Heart left ventricle (tissue), 16 donors: ENCODE measurements at regions of chr6 and their contacts with region 1.

Region 1: DNA sequence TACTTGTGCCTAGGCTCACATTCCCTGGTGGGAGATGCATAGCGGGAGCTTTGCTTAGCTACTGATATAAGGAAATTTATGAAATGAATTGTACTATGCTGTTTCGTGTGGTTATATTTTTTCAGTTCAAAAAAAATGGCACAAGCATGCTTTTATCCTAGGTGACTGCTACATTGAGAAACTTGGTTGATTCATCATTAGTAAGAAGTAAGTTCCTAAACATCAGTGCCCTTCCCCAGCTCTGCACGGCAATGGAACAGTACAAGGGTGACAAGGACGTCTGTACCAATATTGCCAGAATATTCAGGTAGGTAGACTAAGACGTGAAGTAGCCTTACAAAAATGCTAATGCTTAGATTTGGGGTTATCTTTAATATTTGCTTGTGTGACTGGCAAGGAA is 79.7 kb downstream of the ARMC2 start:
- DNase-seq: no peak
- ATAC-seq: no peak
- H3K4me3 ChIP-seq: no peak overlapping the region
- H3K27ac ChIP-seq: no peak overlapping the region
- H3K4me1 ChIP-seq: peaks cover 0 to 8% (median 0%) of the 10 kb centered on the region in 12 donors
- H3K27me3 ChIP-seq: no peaks in the 10 kb centered on the region
- CTCF ChIP-seq: no peak
- POLR2A ChIP-seq: no peak

Region 2: GRCh38 chr6:108565893-108566292 is 362.0 kb before region 1 on chr6:
- intact Hi-C with region 1: no loop called
- DNase-seq: peak in 4 of 5 donors; percentile 43 to 69 (median 52)
- ATAC-seq: peak; percentile 14 to 56 (median 48)
- H3K4me3 ChIP-seq: peak overlapping the region in 5 of 12 donors; percentile 2 to 98 (median 90)
- H3K27ac ChIP-seq: peak overlapping the region; percentile 44 to 100 (median 98)
- H3K4me1 ChIP-seq: peaks cover 9 to 84% (median 55%) of the 10 kb centered on the region in 12 donors
- H3K27me3 ChIP-seq: no peaks in the 10 kb centered on the region
- CTCF ChIP-seq: peak in 7 of 12 donors; percentile 8 to 44 (median 24)
- POLR2A ChIP-seq: no peak

Region 3: DNA sequence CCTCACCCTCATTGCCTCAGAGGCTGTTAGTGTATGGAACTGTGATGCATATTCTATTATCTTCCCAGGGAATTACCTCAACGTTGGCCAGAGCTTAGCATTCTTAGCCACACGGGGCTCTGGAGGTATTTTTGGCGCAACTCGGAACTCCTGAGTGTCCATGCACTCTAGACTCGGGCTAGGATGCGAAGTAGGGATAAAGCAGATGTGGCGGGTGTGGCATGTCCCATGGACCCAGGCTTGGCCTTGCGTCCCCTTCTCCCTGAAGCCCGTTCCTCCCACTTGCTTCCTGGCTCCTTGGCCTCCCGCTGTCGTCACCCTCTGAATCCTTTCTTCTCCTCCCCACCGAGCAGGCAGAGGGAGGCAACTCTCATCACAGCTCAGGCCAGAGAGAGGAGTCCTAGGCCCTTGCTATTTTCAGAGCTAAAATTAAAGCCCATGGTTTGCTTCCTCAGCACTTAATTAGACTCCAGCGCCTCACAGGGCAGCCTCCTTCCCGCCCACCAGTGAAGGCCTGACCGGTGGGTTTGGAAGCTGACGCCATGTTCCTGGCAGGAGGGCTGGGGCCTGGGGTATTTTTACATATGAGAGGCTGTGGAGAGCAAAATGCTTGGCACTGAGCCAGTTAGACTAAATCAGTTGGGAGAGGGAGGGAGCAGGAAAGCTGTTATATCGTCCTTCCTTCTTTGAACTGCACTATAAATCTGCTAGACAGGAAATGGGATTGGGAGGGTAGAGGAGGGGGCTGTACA is 228.5 kb before region 1 on chr6:
- intact Hi-C with region 1: no loop called
- DNase-seq: peak in 4 of 5 donors; percentile 56 to 77 (median 65)
- ATAC-seq: peak; percentile 18 to 77 (median 69)
- H3K4me3 ChIP-seq: no peak overlapping the region
- H3K27ac ChIP-seq: peak overlapping the region; percentile 17 to 84 (median 70)
- H3K4me1 ChIP-seq: peaks cover 0 to 35% (median 26%) of the 10 kb centered on the region in 12 donors
- H3K27me3 ChIP-seq: no peaks in the 10 kb centered on the region
- CTCF ChIP-seq: no peak
- POLR2A ChIP-seq: no peak

Region 4: GRCh38 chr6:108883172-108883571 is 44.8 kb before region 1 on chr6:
- intact Hi-C with region 1: no loop called
- DNase-seq: no peak
- ATAC-seq: no peak
- H3K4me3 ChIP-seq: no peak overlapping the region
- H3K27ac ChIP-seq: peak overlapping the region in 1 of 12 donors; percentile 42
- H3K4me1 ChIP-seq: peaks cover 0 to 21% (median 7%) of the 10 kb centered on the region in 12 donors
- H3K27me3 ChIP-seq: no peaks in the 10 kb centered on the region
- CTCF ChIP-seq: no peak
- POLR2A ChIP-seq: no peak

Region 5: GRCh38 chr6:108916026-108916676 is 11.8 kb before region 1 on chr6:
- intact Hi-C with region 1: loop called in 1 of 10 experiments (anchors 1 kb)
- DNase-seq: no peak
- ATAC-seq: no peak
- H3K4me3 ChIP-seq: no peak overlapping the region
- H3K27ac ChIP-seq: no peak overlapping the region
- H3K4me1 ChIP-seq: peaks cover 0 to 20% (median 0%) of the 10 kb centered on the region in 12 donors
- H3K27me3 ChIP-seq: no peaks in the 10 kb centered on the region
- CTCF ChIP-seq: no peak
- POLR2A ChIP-seq: no peak